BJ (cell line): ENCODE measurements at regions of chr15 and their contacts with region 1.

Region 1: GRCh38 chr15:48861813-48862431 is 16.0 kb upstream of the EID1 start:
- DNase-seq: no peak
- H3K4me3 ChIP-seq: no peak overlapping the region
- H3K27me3 ChIP-seq: no peaks in the 10 kb centered on the region
- CTCF ChIP-seq: peak; percentile 80

Region 2: GRCh38 chr15:48877630-48878595 is 16.0 kb after region 1 on chr15 and contains the start of gene EID1:
- CTCF ChIA-PET with region 1: interaction called, 11 read pairs
- POLR2A ChIA-PET with region 1: no interaction called
- DNase-seq: peak; percentile 79
- H3K4me3 ChIP-seq: peak within 1 kb of the TSS; percentile 79
- H3K27me3 ChIP-seq: no peaks in the 10 kb centered on the region
- CTCF ChIP-seq: no peak
- polyA plus RNA-seq, gene EID1: 165 and 238 TPM in 2 replicates

Region 3: DNA sequence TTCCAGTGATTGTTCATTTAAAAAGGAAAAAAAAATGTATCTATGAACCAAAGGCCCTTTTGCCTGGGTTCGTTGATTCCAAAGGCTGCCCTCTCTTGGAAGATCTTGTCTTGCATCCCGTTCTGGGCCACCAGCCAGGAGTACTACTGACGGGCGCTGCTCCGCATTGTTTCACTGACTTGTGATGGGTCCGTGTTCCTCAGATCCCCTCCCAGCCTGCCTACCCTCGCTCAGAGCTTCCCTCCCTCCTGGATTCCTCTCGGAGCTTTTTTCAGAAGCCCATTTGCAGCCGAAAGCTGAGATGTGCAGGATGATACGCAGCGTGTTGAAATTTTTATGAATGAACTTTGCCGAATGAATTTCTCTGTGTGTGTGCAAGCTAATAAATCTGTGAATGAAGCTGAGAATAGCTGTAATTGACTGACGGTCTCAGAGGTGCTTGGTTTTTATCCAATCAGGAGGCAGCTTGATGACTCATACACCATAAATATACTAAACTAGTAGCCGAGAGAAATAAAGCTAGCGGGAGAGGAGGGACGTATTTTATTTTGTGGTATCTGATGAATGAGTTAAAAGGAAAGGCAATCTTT is 101.7 kb after region 1 on chr15 and contains the start of gene SHC4:
- CTCF ChIA-PET with region 1: interaction called, 43 read pairs
- POLR2A ChIA-PET with region 1: no interaction called
- DNase-seq: no peak
- H3K4me3 ChIP-seq: peak within 1 kb of the TSS; percentile 53
- H3K27me3 ChIP-seq: no peaks in the 10 kb centered on the region
- CTCF ChIP-seq: peak; percentile 44
- polyA plus RNA-seq, gene SHC4: 0.74 and 0.86 TPM in 2 replicates

Region 4: GRCh38 chr15:48975472-48976419 is 113.8 kb after region 1 on chr15:
- CTCF ChIA-PET with region 1: interaction called, 15 read pairs
- POLR2A ChIA-PET with region 1: no interaction called
- DNase-seq: no peak
- H3K4me3 ChIP-seq: peak overlapping the region; percentile 36
- H3K27me3 ChIP-seq: no peaks in the 10 kb centered on the region; the same call in 1 of the 2 replicates
- CTCF ChIP-seq: peak; percentile 65

Region 5: DNA sequence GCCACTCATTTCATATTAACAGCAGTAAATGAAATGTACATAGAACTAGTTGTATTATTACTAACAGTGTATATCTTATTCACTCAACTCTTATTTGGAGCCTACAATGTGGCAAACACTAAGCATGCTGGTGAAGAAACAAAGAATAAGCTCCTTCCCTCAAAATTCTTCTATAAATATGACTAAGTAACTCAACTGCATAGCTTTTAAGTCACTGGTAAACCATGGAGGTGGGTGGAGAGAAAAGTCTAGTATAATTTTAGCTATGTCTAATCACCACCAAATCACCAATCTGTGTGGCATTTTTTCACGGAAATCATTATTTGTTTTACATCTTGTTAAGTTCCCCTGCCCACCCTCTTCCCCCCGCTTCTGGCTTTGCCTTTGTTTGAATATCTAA is 275.9 kb after region 1 on chr15:
- CTCF ChIA-PET with region 1: interaction called, 11 read pairs
- POLR2A ChIA-PET with region 1: interaction called, 4 read pairs
- DNase-seq: no peak
- H3K4me3 ChIP-seq: no peak overlapping the region
- H3K27me3 ChIP-seq: no peaks in the 10 kb centered on the region
- CTCF ChIP-seq: no peak

Region 6: GRCh38 chr15:49145651-49146609 is 284.0 kb after region 1 on chr15:
- CTCF ChIA-PET with region 1: interaction called, 21 read pairs
- POLR2A ChIA-PET with region 1: interaction called, 4 read pairs
- DNase-seq: no peak
- H3K4me3 ChIP-seq: no peak overlapping the region
- H3K27me3 ChIP-seq: no peaks in the 10 kb centered on the region
- CTCF ChIP-seq: peak; percentile 73